GM10248 (cell line): ENCODE measurements at regions of chr20 and their contacts with region 1.

Region 1: GRCh38 chr20:25178563-25179438 is 16.7 kb upstream of the ENTPD6 start:
- DNase-seq: peak; percentile 59
- CTCF ChIP-seq: peak; percentile 66

Region 2: DNA sequence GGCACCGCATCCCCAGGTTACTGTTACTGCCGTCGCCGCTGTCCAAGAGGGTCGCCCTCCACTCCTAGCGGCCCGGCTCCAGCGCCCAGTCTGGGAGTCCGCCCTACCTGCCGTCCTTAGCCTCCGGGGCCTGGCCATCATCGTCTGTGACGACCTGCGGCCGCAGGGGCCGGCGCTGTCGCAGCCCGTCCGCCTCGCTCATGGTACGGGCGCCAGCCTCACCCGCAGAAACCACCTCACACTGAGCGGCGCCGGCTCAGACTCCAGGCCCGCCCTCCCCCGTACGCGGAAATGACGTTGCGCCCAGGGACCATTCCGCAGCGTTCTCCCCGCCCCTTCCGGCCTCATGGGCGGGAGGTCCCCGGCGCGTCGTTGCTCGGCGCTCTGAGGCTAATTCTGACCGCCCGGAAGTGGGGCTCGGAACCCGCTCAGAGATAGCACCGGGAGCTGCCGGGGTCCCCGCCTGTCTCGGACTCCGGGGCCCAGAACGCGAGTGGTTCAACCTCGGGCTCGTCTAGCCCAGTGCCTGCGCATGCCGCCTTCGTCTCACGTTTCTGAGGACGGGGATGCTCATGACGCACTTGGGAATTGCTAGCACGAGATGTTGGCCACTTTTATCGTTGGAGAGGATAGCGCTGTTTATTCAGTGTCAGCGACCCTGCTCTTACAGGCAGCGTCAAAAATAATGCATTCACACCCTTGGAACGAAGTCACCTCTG is 186.2 kb before region 1 on chr20 and contains the start of gene APMAP:
- CTCF ChIA-PET with region 1: interaction called, 14 read pairs
- POLR2A ChIA-PET with region 1: no interaction called
- DNase-seq: peak; percentile 98
- CTCF ChIP-seq: no peak

Region 3: DNA sequence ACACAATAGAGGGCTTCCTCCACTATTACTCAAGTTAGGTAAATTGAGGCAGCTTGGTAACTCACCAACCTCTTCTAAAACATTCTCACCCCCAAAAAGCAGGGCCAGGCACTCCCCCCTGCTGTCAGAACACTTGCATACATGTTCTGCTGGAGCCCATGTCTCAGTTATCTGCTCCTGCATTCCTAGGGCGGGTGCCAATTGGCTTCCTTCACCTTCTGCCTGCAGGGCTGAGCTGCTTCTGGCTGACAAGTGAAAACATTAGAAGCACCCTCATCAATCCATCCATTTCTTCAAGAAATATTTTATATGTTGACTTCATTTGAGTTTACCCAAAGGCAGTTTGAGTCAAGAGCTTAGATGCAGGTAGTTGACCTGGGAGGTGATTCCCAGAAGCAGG is 12.3 kb after region 1 on chr20:
- CTCF ChIA-PET with region 1: interaction called, 11 read pairs
- POLR2A ChIA-PET with region 1: no interaction called
- DNase-seq: peak; percentile 1
- CTCF ChIP-seq: no peak